ENCODE measurements at regions of chr10 and their contacts with region 1.

Region 1: GRCh38 chr10:37976091-37976879 is at the start of gene ZNF25:
- DNase-seq: peak; percentile 100
- H3K4me3 ChIP-seq: peak within 1 kb of the TSS; percentile 77 to 97 (median 95)
- H3K27ac ChIP-seq: peak within 1 kb of the TSS; percentile 96 to 99 (median 98)
- H3K4me1 ChIP-seq: peaks cover 6 to 20% (median 18%) of the 10 kb centered on the region in 4 donors
- H3K27me3 ChIP-seq: no peaks in the 10 kb centered on the region
- CTCF ChIP-seq: peak; percentile 83 to 90 (median 88)
- EP300 ChIP-seq: no peak
- POLR2A ChIP-seq: peak; percentile 73
- total RNA-seq, gene ZNF25: 16.4 to 24.5 (median 19.6) TPM

Region 2: DNA sequence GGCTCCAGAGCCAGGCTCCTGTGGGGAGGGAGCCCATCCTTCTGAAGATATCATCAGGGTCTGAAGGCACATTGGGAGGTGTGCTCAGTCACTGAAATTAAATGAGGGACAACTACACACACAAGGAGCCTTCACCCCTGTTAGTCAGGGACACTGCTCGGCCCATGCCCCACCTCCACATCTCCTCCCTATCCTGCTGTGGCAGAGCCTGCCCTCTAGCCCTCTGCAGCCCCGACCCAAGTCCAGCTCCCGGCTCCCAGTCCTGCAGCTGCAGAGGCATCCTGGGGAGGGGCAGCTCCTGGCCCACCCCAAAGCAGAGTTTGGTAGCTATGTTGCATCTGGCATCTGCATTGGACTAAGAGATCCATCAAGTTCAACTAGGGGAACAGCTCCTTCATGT is 255.2 kb before region 1 on chr10:
- intact Hi-C with region 1: no loop called
- DNase-seq: peak; percentile 53
- H3K4me3 ChIP-seq: no peak overlapping the region
- H3K27ac ChIP-seq: no peak overlapping the region
- H3K4me1 ChIP-seq: no peaks in the 10 kb centered on the region
- H3K27me3 ChIP-seq: peaks cover 0 to 3% (median 0%) of the 10 kb centered on the region in 4 donors
- CTCF ChIP-seq: no peak
- EP300 ChIP-seq: no peak
- POLR2A ChIP-seq: no peak

Region 3: DNA sequence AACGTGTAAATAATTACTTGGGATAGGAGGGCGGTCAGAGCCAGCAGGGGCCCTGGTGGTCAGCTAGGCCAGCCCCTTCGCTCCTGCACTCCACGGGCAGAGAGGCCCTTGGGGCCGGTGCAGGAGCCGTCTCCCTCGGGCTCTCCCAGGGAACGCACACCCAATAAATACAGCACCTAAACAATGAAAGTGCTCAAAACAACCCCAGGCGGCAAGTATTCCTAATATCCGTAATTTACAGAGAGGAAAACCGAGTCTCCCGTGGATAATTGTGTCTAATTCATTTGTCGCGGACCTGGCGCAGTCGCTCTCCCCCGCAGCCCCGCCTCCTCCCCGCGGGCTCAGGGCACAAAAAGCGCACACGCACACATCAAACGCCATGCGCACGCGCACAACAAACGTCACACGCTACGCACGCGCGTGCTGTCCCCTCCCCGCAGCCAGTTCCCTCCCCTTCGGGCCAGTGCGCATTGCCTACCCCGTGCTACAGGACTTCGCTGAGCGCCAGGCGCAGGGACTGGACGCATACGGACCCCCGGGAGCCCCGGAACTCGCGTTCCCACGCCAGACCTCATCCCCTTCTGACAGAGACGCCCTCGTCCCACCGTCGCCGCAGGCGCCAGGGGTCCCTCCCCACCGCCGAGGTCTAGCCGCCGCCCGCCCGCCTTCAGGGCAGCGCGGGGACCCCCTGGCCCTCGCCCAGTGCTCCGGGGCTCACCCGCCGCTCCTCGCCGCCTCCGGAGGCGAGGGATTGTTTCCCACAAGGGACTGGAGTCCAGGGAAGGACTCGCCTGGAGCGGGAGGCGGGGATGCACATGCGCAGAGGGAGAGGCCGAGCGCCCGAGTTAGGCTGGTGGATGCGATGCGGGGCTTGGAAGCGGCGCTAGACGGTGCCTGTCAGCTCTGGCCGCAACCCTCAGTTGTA is 118.7 kb before region 1 on chr10 and contains the start of gene ZNF248:
- intact Hi-C with region 1: loop called (anchors 1 kb)
- DNase-seq: peak; percentile 98
- H3K4me3 ChIP-seq: peak within 1 kb of the TSS; percentile 90 to 99 (median 95)
- H3K27ac ChIP-seq: peak within 1 kb of the TSS; percentile 100
- H3K4me1 ChIP-seq: peaks cover 27 to 59% (median 54%) of the 10 kb centered on the region in 4 donors
- H3K27me3 ChIP-seq: no peaks in the 10 kb centered on the region
- CTCF ChIP-seq: peak in 1 of 3 experiments; percentile 2
- EP300 ChIP-seq: peak; percentile 87
- POLR2A ChIP-seq: peak; percentile 90
- total RNA-seq, gene ZNF248: 12.9 to 23.7 (median 17.6) TPM

Region 4: GRCh38 chr10:37992083-37992482 is 15.8 kb after region 1 on chr10:
- intact Hi-C with region 1: no loop called
- DNase-seq: no peak
- H3K4me3 ChIP-seq: no peak overlapping the region
- H3K27ac ChIP-seq: no peak overlapping the region
- H3K4me1 ChIP-seq: no peaks in the 10 kb centered on the region
- H3K27me3 ChIP-seq: no peaks in the 10 kb centered on the region
- CTCF ChIP-seq: no peak
- EP300 ChIP-seq: no peak
- POLR2A ChIP-seq: no peak

Region 5: GRCh38 chr10:38010119-38010903 is 34.0 kb after region 1 on chr10 and contains the start of gene ZNF33A:
- intact Hi-C with region 1: loop called (anchors 1 kb)
- DNase-seq: peak; percentile 96
- H3K4me3 ChIP-seq: peak within 1 kb of the TSS; percentile 78 to 94 (median 82)
- H3K27ac ChIP-seq: peak within 1 kb of the TSS; percentile 98 to 100 (median 98)
- H3K4me1 ChIP-seq: peaks cover 7 to 24% (median 18%) of the 10 kb centered on the region in 4 donors
- H3K27me3 ChIP-seq: no peaks in the 10 kb centered on the region
- CTCF ChIP-seq: peak; percentile 4 to 22 (median 9)
- EP300 ChIP-seq: no peak
- POLR2A ChIP-seq: peak; percentile 23
- total RNA-seq, gene ZNF33A: 24.9 to 31.5 (median 26.4) TPM

Region 6: GRCh38 chr10:38094158-38094920 is 118.1 kb after region 1 on chr10 and contains the start of gene ZNF37A:
- intact Hi-C with region 1: loop called (anchors 2 kb)
- DNase-seq: peak; percentile 99
- H3K4me3 ChIP-seq: peak within 1 kb of the TSS; percentile 62 to 94 (median 81)
- H3K27ac ChIP-seq: peak within 1 kb of the TSS; percentile 85 to 94 (median 88)
- H3K4me1 ChIP-seq: peaks cover 8 to 18% (median 17%) of the 10 kb centered on the region in 4 donors
- H3K27me3 ChIP-seq: no peaks in the 10 kb centered on the region
- CTCF ChIP-seq: peak in 1 of 3 experiments; percentile 28
- EP300 ChIP-seq: no peak
- POLR2A ChIP-seq: no peak
- total RNA-seq, gene ZNF37A: 11.4 to 19.1 (median 17.7) TPM

Measured in esophagus muscularis mucosa (tissue), 4 donors.